ENCODE measurements at regions of chr1 and their contacts with region 1.

Region 1: GRCh38 chr1:34460193-34460592 is 283.5 kb downstream of the C1orf94 start:
- DNase-seq: peak in 6 of 9 donors; percentile 4 to 50 (median 10)
- ATAC-seq: no peak
- H3K4me3 ChIP-seq: no peak overlapping the region
- H3K4me3 Mint-ChIP-seq: no peak overlapping the region
- H3K27ac ChIP-seq: no peak overlapping the region
- H3K27ac Mint-ChIP-seq: no peak overlapping the region
- H3K4me1 ChIP-seq: no peaks in the 10 kb centered on the region
- H3K4me1 Mint-ChIP-seq: no peaks in the 10 kb centered on the region
- H3K27me3 ChIP-seq: no peaks in the 10 kb centered on the region
- H3K27me3 Mint-ChIP-seq: peaks cover 0 to 33% (median 19%) of the 10 kb centered on the region in 5 donors

Region 2: GRCh38 chr1:34597877-34598514 is 137.8 kb after region 1 on chr1:
- CTCF ChIA-PET with region 1: no interaction called
- POLR2A ChIA-PET with region 1: no interaction called
- intact Hi-C with region 1: loop called in 1 of 2 experiments (anchors 1 kb)
- DNase-seq: peak in 3 of 9 donors; percentile 4 to 67 (median 15)
- ATAC-seq: no peak
- H3K4me3 ChIP-seq: no peak overlapping the region
- H3K4me3 Mint-ChIP-seq: no peak overlapping the region
- H3K27ac ChIP-seq: no peak overlapping the region
- H3K27ac Mint-ChIP-seq: no peak overlapping the region
- H3K4me1 ChIP-seq: no peaks in the 10 kb centered on the region
- H3K4me1 Mint-ChIP-seq: no peaks in the 10 kb centered on the region
- H3K27me3 ChIP-seq: no peaks in the 10 kb centered on the region
- H3K27me3 Mint-ChIP-seq: peaks cover 3 to 37% (median 14%) of the 10 kb centered on the region in 5 donors